ENCODE measurements at regions of chr3 and their contacts with region 1.

Region 1: DNA sequence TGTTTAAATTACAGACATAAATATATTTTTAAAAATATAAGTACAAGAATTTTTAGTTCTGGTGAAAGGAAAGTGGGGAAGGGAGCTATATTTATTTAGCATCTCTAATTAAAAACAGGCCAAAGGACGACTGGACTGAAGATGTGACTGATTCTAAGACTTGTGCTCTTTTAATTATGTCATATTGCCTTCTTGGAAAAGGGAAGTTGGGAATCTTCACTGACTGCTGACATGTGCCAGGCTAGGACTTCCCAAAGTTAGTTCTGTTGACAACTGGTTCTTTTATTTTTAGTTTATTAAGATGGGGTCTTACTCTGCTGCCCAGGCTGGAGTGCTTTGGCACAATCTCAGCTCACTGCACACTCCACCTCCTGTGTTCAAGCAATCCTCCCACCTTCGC is 13.5 kb downstream of the CNOT10 start:
- DNase-seq: no peak
- ATAC-seq: no peak
- H3K4me3 ChIP-seq: no peak overlapping the region
- H3K4me3 Mint-ChIP-seq: no peak overlapping the region
- H3K27ac ChIP-seq: no peak overlapping the region
- H3K27ac Mint-ChIP-seq: no peak overlapping the region
- H3K4me1 ChIP-seq: no peaks in the 10 kb centered on the region
- H3K4me1 Mint-ChIP-seq: peaks cover 30% of the 10 kb centered on the region
- H3K27me3 ChIP-seq: no peaks in the 10 kb centered on the region
- H3K27me3 Mint-ChIP-seq: no peaks in the 10 kb centered on the region
- CTCF ChIP-seq: no peak

Region 2: GRCh38 chr3:32712611-32713010 is 14.1 kb after region 1 on chr3:
- CTCF ChIA-PET with region 1: no interaction called
- POLR2A ChIA-PET with region 1: no interaction called
- intact Hi-C with region 1: loop called in 1 of 2 experiments (anchors 1 kb)
- DNase-seq: no peak
- ATAC-seq: no peak
- H3K4me3 ChIP-seq: no peak overlapping the region
- H3K4me3 Mint-ChIP-seq: no peak overlapping the region
- H3K27ac ChIP-seq: no peak overlapping the region
- H3K27ac Mint-ChIP-seq: no peak overlapping the region
- H3K4me1 ChIP-seq: no peaks in the 10 kb centered on the region
- H3K4me1 Mint-ChIP-seq: peaks cover 1% of the 10 kb centered on the region
- H3K27me3 ChIP-seq: no peaks in the 10 kb centered on the region
- H3K27me3 Mint-ChIP-seq: no peaks in the 10 kb centered on the region
- CTCF ChIP-seq: no peak

Region 3: DNA sequence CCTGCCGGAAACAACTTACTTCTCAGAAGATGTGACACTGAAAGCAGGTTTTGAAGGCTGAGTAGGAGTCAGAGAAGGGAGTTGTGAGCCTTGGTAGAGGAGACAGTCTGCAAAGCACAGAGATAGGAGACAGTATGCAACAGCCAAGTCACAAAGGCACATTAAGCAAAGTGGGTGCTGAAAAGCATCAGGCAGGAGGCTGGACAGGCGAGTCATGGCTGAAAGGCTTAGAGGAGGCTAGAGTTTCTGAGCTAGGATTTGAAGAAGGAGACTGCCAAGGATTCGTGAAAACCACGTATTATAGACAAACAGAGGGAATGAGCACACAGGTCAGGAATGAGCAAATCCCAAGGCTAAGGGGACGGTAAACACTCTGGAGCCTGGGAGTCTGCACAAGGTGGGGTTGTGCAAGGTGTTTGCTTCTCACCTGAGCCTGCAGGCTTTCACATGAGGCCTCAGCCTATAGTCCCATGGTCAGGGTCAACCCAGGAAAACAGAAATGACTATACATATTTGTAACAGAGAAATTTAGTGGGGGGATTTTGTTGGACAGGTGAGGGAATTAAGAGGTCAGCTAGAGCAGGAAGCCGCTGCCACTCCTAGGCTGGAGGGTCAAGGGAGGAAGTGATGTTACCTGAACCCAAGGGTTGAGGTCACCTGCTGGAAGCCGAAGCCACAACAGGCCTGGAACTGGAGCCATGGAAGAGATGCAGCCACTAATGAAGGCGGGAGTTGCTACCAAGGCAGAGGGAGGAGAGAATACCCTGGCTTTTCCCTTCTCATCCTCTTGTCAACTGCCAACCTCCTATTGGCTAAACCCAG is 96.2 kb after region 1 on chr3:
- CTCF ChIA-PET with region 1: no interaction called
- POLR2A ChIA-PET with region 1: no interaction called
- intact Hi-C with region 1: no loop called
- DNase-seq: no peak
- ATAC-seq: no peak
- H3K4me3 ChIP-seq: no peak overlapping the region
- H3K4me3 Mint-ChIP-seq: no peak overlapping the region
- H3K27ac ChIP-seq: no peak overlapping the region
- H3K27ac Mint-ChIP-seq: no peak overlapping the region
- H3K4me1 ChIP-seq: no peaks in the 10 kb centered on the region
- H3K4me1 Mint-ChIP-seq: no peaks in the 10 kb centered on the region
- H3K27me3 ChIP-seq: no peaks in the 10 kb centered on the region
- H3K27me3 Mint-ChIP-seq: peaks cover 3% of the 10 kb centered on the region
- CTCF ChIP-seq: no peak

Measured in CD8-positive, alpha-beta T cell (primary cell).